Activated CD4-positive, alpha-beta T cell treated with anti-CD3 and anti-CD28 coated beads for 36 hours (primary cell): ENCODE measurements at regions of chr22 and their contacts with region 1.

Region 1: DNA sequence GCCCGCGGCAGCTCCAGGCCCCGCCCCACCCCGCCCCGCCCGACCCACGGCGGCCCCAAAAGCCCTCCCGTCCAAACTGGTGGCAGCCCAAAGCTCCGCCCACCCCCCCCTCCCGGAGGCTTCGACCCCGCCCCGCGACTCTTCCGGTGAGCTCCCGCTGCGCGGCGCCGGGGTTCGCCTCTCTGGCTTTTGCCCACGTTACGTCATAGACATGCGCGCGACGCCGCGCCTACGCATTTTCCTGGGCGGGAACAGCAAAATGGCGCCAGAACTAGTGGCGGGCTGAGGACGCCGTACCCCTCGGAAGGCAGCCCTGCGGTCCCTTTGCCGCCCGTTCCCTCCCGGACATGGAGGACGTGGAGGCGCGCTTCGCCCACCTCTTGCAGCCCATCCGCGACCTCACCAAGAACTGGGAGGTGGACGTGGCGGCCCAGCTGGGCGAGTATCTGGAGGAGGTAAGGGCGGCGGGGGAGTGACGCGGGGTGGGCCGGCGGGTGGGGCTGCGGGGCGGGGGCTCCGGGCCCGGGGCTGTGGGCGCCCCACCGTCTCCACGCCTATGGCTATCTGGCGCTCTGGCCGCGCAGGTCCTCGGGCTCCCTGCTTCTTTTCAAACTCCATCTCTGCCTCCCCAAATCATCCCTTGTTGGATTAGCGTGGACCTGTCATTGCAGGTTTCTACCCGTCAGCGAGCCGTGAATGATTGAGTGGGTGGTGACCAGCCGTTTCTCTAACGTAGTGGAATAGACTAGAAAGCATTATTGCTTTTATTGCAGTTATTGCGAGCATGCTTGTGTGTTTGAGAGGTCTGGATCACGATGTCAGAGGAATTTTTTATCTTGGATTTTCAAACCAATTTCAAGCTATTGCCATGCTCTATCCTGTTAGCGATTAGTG is at the start of gene NCAPH2:
- DNase-seq: peak; percentile 99
- ATAC-seq: peak; percentile 79
- H3K4me3 Mint-ChIP-seq: peak within 1 kb of the TSS; percentile 91
- H3K27ac Mint-ChIP-seq: peak within 1 kb of the TSS; percentile 95
- H3K4me1 Mint-ChIP-seq: peaks cover 23% of the 10 kb centered on the region
- H3K27me3 Mint-ChIP-seq: no peaks in the 10 kb centered on the region
- total RNA-seq, gene NCAPH2: 115 to 123 TPM

Region 2: GRCh38 chr22:50244420-50245213 is 263.6 kb before region 1 on chr22 and contains the start of gene TUBGCP6:
- CTCF ChIA-PET with region 1: interaction called, 3 read pairs
- POLR2A ChIA-PET with region 1: no interaction called
- intact Hi-C with region 1: loop called (anchors 1 to 10 kb)
- DNase-seq: peak; percentile 96
- ATAC-seq: peak; percentile 80
- H3K4me3 Mint-ChIP-seq: peak within 1 kb of the TSS; percentile 94
- H3K27ac Mint-ChIP-seq: peak within 1 kb of the TSS; percentile 100
- H3K4me1 Mint-ChIP-seq: peaks cover 23% of the 10 kb centered on the region
- H3K27me3 Mint-ChIP-seq: no peaks in the 10 kb centered on the region
- total RNA-seq, gene TUBGCP6: 42.2 to 49.2 TPM

Region 3: DNA sequence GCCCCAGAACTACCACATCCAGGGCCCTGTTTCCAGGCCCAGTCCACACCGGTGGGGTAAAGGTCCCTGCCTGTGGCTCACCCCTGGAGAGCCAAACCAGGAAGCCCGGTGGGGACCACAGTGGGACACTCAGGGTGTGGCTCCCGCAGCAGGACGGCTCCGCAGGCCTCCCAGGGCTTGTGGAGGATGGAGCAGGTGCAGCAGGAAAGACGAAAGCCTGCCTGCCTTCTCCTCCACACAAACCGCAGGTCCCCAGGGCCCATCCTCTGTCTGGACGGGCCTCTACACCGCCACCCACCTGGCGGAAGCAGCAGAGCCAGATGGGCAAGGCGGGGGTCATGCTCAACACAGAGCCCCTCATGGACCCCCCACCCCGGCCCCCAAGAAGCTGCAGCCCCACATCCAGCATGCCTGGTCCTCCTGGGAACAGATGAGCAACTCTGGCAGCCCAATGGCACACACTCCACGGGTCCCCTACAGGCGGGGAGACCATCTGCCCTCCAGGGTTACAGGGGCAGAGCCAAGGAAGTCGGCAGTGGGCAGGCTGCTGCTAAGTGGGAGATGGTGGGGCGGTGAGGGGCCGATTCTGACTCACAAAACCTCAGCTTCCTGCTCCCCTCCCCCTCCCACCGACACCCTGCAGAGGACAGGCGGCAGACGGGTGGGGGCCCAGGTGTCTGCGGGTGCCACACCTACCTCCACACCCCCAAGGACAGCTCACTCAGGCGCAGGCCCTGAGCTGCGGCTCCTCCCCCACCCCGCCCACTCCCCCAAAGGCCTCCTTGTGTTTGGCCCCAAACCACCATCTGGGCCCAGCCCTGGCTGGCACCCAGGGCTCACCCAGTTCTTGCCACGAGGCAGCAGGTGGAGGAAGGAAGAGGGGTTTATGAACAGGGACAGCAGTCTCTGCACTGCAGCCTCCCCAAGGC is 38.6 kb before region 1 on chr22:
- CTCF ChIA-PET with region 1: interaction called, 3 read pairs
- POLR2A ChIA-PET with region 1: interaction called, 10 read pairs
- intact Hi-C with region 1: loop called (anchors 1 to 2 kb)
- DNase-seq: peak; percentile 97
- ATAC-seq: peak; percentile 84
- H3K4me3 Mint-ChIP-seq: peak overlapping the region; percentile 59
- H3K27ac Mint-ChIP-seq: peak overlapping the region; percentile 95
- H3K4me1 Mint-ChIP-seq: peaks cover 53% of the 10 kb centered on the region
- H3K27me3 Mint-ChIP-seq: no peaks in the 10 kb centered on the region

Region 4: GRCh38 chr22:50481440-50482106 is 26.7 kb before region 1 on chr22 and contains the start of gene ADM2:
- CTCF ChIA-PET with region 1: interaction called, 4 read pairs
- POLR2A ChIA-PET with region 1: no interaction called
- intact Hi-C with region 1: loop called in 1 of 2 experiments (anchors 1 kb)
- DNase-seq: peak; percentile 82
- ATAC-seq: peak; percentile 87
- H3K4me3 Mint-ChIP-seq: peak within 1 kb of the TSS; percentile 74
- H3K27ac Mint-ChIP-seq: no peak within 1 kb of the TSS
- H3K4me1 Mint-ChIP-seq: no peaks in the 10 kb centered on the region
- H3K27me3 Mint-ChIP-seq: peaks cover 8% of the 10 kb centered on the region
- total RNA-seq, gene ADM2: 7.5 to 7.9 TPM

Region 5: GRCh38 chr22:50530877-50531545 is 22.8 kb after region 1 on chr22:
- CTCF ChIA-PET with region 1: interaction called, 76 read pairs
- POLR2A ChIA-PET with region 1: interaction called, 65 read pairs
- intact Hi-C with region 1: loop called in 1 of 2 experiments (anchors 1 kb)
- DNase-seq: peak; percentile 92
- ATAC-seq: peak; percentile 45
- H3K4me3 Mint-ChIP-seq: peak overlapping the region; percentile 87
- H3K27ac Mint-ChIP-seq: peak overlapping the region; percentile 97
- H3K4me1 Mint-ChIP-seq: peaks cover 45% of the 10 kb centered on the region
- H3K27me3 Mint-ChIP-seq: no peaks in the 10 kb centered on the region

Region 6: GRCh38 chr22:50562523-50563412 is 54.5 kb after region 1 on chr22 and contains the start of gene SYCE3:
- CTCF ChIA-PET with region 1: interaction called, 5 read pairs
- POLR2A ChIA-PET with region 1: interaction called, 3 read pairs
- intact Hi-C with region 1: loop called in 1 of 2 experiments (anchors 1 kb)
- DNase-seq: peak; percentile 99
- ATAC-seq: peak; percentile 96
- H3K4me3 Mint-ChIP-seq: peak within 1 kb of the TSS; percentile 83
- H3K27ac Mint-ChIP-seq: peak within 1 kb of the TSS; percentile 84
- H3K4me1 Mint-ChIP-seq: peaks cover 19% of the 10 kb centered on the region
- H3K27me3 Mint-ChIP-seq: no peaks in the 10 kb centered on the region
- total RNA-seq, gene SYCE3: 3.8 TPM